ENCODE measurements at regions of chr16 and their contacts with region 1.

Region 1: GRCh38 chr16:19907161-19907992 is 22.7 kb upstream of the GPRC5B start:
- DNase-seq: no peak
- H3K4me3 ChIP-seq: no peak overlapping the region
- H3K27me3 ChIP-seq: peaks cover 2% of the 10 kb centered on the region; the same call in 1 of the 2 replicates
- CTCF ChIP-seq: peak; percentile 97

Region 2: DNA sequence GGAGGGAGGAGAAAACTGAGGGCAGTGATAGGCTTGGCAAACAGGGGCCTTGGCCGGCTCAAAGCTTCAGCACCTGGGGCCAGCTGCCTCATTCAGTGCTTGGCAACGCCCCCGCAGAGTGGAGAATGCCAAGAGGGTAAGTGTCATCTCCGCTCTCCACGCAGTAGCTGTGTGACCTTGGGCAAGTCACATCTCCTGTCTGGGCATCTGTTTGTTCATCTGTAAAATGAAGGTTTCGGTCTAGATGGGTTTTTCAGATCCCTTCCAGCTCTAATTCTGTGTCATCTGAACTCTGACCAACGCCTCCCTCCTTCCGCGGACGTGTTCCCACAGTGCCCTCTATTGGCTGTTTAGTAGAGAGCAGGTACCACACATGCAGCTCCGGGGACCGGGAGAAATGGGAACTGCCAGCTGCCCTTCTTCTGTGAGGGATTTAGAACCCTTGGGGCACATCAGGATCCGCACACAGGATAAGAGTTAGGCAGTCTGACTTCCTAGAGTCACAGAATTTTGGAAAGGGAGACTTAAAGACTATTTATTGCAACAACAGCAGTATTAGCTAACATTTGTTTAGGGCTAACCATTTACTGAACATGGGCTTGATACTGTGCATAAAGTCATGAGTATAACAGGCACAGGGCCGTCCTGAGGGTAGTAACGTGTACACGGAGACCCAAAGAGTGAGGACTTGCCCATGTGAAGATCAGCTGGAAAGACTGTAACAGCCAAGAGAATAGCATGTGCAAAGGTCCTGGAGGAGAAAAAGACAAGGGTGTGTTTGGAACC is 393.1 kb after region 1 on chr16:
- CTCF ChIA-PET with region 1: interaction called, 26 read pairs
- POLR2A ChIA-PET with region 1: no interaction called
- DNase-seq: no peak
- H3K4me3 ChIP-seq: no peak overlapping the region
- H3K27me3 ChIP-seq: no peaks in the 10 kb centered on the region
- CTCF ChIP-seq: peak; percentile 65

Region 3: DNA sequence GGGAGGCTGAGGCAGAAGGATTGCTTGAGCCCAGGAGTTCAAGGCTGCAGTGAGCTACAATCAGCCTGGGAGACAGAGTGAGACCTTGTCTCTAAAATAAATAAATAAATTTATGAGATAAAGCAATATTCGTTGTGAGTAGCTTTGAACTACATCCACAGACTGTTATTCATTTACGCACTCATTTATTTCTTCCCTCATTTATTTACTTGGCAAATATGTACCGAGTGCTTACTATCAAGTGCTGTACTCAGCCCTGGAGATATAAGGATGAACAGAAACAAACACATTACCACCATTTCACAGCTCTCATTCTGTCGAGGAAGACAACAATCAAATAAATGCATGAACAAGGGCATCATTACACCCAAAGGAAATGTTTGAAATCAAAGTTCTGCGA is 469.8 kb after region 1 on chr16:
- CTCF ChIA-PET with region 1: interaction called, 12 read pairs
- POLR2A ChIA-PET with region 1: no interaction called
- DNase-seq: no peak
- H3K4me3 ChIP-seq: no peak overlapping the region
- H3K27me3 ChIP-seq: no peaks in the 10 kb centered on the region
- CTCF ChIP-seq: no peak

Measured in BJ (cell line).